ENCODE measurements at regions of chr10 and their contacts with region 1.

Region 1: DNA sequence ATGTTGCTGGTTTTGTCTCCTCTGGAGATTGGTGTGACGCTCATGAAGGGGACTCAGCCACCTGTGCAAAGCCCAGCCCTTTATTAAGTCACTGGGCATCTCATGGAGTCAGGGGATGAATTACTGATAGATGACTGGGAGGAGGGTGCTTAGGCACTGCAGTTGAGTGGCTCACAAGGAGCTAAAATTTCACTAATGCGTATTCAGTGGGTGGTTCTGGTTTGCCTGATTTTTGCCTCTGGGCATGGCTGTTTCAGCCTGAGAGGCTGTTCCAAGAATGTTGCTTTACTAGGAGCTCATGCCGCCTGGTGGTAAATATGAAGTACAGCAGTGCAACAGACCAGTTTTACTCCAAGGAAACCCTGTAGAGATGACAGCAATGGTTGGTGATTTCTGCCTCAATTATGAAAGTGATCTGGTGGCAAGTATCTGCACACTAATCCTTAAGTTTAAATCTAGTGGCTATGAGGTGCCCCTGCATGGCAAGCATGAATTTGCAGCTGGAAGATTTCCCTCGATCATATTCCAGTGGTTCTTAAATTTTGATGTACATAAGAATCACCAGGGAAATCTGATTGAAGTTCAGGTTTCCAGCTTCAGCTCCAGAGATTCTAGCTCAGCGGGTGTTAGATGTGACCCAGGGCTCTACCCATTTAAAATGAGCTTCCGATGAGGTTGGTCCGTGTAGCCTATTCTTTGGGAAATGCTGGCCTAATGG is 19.9 kb downstream of the ACTA2 start:
- DNase-seq: peak; percentile 32 to 49
- ATAC-seq: peak; percentile 75

Region 2: GRCh38 chr10:88835096-88835909 is 97.4 kb before region 1 on chr10:
- intact Hi-C with region 1: loop called (anchors 2 to 10 kb)
- DNase-seq: peak; percentile 81 to 91
- ATAC-seq: peak; percentile 96

Region 3: DNA sequence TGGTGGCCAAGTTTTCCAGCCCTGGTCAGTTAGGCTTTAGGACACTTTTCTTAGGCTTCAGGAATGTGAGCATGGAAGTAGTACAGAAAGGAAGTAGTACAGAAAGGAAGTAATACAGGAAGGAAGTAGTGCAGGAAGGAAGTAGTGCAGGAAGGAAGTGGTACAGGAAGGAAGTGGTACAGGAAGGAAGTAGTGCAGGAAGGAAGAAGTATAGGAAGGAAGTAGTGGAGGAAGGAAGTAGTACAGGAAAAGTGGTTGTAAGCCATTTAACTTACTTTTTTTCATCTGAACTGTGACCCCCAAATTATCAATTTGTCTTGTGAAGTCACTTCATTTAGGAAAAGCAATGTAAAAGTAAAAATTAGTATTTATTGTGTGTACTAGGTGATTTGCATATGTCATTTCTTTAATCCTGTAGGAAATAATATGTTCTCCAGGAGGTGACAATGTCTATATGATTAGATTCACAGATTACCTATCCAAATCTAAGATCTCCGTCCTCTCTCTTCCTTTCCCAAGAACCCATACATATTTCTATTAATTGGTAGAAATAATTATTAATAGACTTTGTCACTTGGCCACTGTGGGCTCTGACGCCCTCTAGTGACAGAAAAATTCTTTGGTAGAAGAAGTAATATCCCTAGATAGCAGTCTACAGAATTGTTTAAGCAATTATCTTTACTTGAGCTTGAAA is 54.0 kb after region 1 on chr10:
- intact Hi-C with region 1: loop called (anchors 2 to 5 kb)
- DNase-seq: no peak
- ATAC-seq: no peak

Region 4: GRCh38 chr10:89217057-89217990 is 284.6 kb after region 1 on chr10:
- intact Hi-C with region 1: loop called in 1 of 2 experiments (anchors 5 kb)
- DNase-seq: peak in 1 of 2 donors; percentile 68
- ATAC-seq: peak; percentile 65